ENCODE measurements at regions of chr1 and their contacts with region 1.

Region 1: DNA sequence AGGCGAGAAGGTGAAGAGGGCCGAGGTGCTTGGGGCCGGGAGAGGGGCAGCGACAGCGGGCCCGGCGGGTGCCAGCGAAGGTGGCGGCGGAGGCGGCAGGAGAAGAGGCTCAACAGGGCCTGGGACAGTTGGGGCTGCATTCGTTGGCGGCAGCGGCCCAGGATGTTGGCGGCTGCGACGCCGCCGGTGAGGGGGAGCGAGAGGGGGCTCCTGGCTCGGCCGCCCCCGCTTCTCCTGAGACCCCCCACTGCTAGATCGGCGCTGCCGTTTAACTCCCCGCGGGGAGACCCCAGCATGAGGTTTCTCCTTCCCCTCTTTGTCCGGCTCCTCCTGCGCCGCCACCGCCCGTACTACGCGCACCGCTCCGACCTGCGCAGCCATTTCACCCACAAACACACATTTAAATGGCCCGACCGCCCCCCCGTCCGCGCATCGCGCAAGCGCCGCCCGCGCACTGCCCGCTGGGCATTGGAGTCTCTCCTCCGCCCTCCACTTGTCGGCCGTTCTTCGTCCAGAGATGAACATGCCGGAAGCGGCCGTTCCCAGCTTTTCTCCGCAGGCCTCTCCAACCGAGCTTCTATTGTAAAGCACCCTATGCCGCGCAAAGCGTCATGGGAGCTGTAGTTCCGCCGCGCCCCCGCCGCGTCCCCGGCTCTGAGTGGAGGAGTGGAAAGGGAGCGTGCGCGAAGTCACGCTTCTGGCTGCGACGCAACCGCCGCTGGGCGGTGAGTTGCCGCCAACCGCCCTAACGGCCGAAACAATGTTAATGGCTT is at the start of gene RSBN1:
- DNase-seq: peak; percentile 100
- H3K4me3 Mint-ChIP-seq: peak within 1 kb of the TSS; percentile 96
- H3K27ac Mint-ChIP-seq: peak within 1 kb of the TSS; percentile 96
- H3K4me1 Mint-ChIP-seq: peaks cover 21% of the 10 kb centered on the region
- H3K27me3 Mint-ChIP-seq: no peaks in the 10 kb centered on the region
- total RNA-seq, gene RSBN1: 20.9 and 21.5 TPM in 2 replicates

Region 2: GRCh38 chr1:112955781-112956543 is 856.1 kb before region 1 on chr1 and contains the start of gene SLC16A1:
- intact Hi-C with region 1: loop called (anchors 5 kb)
- DNase-seq: peak; percentile 97
- H3K4me3 Mint-ChIP-seq: peak within 1 kb of the TSS; percentile 88
- H3K27ac Mint-ChIP-seq: peak within 1 kb of the TSS; percentile 100
- H3K4me1 Mint-ChIP-seq: peaks cover 51% of the 10 kb centered on the region
- H3K27me3 Mint-ChIP-seq: no peaks in the 10 kb centered on the region
- total RNA-seq, gene SLC16A1: 79.2 and 79.7 TPM in 2 replicates

Region 3: DNA sequence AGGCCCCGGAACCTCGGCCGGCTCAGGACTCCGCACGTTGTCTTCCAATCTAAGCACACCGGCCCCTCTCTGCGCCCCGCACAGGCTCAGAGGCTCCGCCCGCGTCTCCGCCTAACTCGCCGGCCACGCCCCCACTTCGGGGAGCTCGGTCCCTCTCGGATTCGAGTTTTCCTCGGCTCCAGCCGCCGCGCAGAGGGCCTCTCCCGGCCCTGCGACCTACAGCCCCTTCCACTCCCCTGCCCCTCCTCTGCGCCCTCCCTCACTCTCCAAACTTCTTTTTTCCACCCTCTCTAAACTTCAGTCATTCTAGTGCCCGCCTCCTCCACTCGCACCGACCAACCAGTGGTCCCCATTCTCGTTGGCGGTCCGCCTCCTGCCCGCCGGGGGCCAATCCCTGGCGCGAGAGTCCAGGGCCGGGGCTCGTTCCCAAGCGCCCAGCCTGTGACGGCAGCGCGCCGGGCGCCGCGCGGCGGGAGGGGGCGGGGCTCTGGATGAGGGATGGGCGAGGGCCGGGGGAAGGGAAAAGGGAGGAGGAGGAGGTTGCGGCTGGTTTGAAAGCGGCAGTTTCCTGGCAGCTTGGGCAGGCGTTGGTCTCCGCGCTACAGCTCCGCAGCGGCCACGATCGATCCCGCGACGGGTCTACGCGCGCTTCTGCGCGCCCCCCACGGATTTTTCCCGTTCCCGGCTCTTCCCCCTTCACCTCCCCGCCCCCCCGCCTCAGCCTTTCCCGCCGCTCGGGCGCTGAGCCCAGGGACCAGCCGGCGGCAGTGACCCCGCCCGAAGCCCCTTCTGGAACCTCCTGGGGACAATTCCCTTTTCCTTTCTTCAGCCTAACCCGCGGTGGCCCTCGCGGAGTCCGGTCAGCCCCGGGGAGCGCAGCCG is 421.9 kb before region 1 on chr1 and contains the start of gene MAGI3:
- intact Hi-C with region 1: loop called (anchors 2 kb)
- DNase-seq: peak; percentile 99
- H3K4me3 Mint-ChIP-seq: peak within 1 kb of the TSS; percentile 90
- H3K27ac Mint-ChIP-seq: peak within 1 kb of the TSS; percentile 74
- H3K4me1 Mint-ChIP-seq: peaks cover 28% of the 10 kb centered on the region
- H3K27me3 Mint-ChIP-seq: peaks cover 46% of the 10 kb centered on the region
- total RNA-seq, gene MAGI3: 3.7 and 3.8 TPM in 2 replicates

Region 4: GRCh38 chr1:113759333-113760101 is 52.6 kb before region 1 on chr1 and contains the start of gene PHTF1:
- intact Hi-C with region 1: loop called (anchors 1 kb)
- DNase-seq: peak; percentile 89
- H3K4me3 Mint-ChIP-seq: peak within 1 kb of the TSS; percentile 97
- H3K27ac Mint-ChIP-seq: peak within 1 kb of the TSS; percentile 97
- H3K4me1 Mint-ChIP-seq: peaks cover 30% of the 10 kb centered on the region
- H3K27me3 Mint-ChIP-seq: no peaks in the 10 kb centered on the region
- total RNA-seq, gene PHTF1: 15.6 and 19.2 TPM in 2 replicates

Region 5: DNA sequence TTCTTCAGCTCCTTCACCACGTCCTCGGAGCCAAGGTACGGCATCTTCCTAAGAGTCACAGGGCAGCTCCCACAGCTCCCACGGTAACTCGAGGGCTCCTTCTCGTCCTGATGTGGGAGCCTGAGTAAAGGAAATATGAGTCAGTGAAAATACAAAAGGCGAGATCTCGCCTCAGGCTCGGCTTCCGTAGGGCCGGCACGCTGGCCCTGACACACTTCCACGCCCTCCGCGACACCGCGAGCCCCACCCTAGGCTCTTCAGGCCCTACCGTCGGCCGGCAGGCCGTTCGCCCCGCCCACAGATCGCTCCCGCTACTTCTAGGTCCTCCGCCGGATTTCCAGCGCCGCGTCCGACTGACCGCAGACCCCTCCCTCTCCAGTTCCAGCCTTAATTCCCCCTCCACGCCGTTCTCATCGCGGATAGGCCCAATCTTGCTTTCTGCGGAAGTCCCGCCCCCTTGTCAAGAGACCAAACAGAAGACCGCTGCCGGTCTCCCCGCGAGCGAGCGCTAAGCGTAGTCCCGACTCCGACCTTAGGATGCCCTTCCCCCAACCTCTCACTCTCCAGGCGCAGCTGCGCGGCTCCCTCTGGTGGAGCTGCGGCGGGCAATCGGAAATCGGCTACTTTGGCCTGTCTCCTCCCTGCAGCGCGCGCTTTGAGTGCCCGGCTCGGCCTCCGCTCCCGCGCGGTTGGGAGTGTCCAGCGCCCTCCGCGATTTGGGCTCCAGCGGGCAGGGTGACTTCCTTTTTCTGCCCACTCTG is 92.8 kb after region 1 on chr1 and contains the starts of genes AP4B1 and DCLRE1B:
- intact Hi-C with region 1: loop called (anchors 1 kb)
- DNase-seq: peak; percentile 99
- H3K4me3 Mint-ChIP-seq: peak within 1 kb of the TSS; percentile 99
- H3K27ac Mint-ChIP-seq: peak within 1 kb of the TSS; percentile 98
- H3K4me1 Mint-ChIP-seq: peaks cover 53% of the 10 kb centered on the region
- H3K27me3 Mint-ChIP-seq: no peaks in the 10 kb centered on the region
- total RNA-seq, gene AP4B1: 41.7 and 42.3 TPM in 2 replicates
- total RNA-seq, gene DCLRE1B: 21.5 and 22.5 TPM in 2 replicates

Measured in activated CD4-positive, alpha-beta T cell treated with anti-CD3 and anti-CD28 coated beads, Interleukin-2, amount 10 ng/mL, durations not matched to agents 24 days and 14 days (primary cell).